Activated naive CD4-positive, alpha-beta T cell treated with anti-CD3 and anti-CD28 coated beads, Interleukin-2, amount 10 ng/mL, durations not matched to agents 7 days and 5 days (primary cell): ENCODE measurements at regions of chr17 and their contacts with region 1.

Region 1: DNA sequence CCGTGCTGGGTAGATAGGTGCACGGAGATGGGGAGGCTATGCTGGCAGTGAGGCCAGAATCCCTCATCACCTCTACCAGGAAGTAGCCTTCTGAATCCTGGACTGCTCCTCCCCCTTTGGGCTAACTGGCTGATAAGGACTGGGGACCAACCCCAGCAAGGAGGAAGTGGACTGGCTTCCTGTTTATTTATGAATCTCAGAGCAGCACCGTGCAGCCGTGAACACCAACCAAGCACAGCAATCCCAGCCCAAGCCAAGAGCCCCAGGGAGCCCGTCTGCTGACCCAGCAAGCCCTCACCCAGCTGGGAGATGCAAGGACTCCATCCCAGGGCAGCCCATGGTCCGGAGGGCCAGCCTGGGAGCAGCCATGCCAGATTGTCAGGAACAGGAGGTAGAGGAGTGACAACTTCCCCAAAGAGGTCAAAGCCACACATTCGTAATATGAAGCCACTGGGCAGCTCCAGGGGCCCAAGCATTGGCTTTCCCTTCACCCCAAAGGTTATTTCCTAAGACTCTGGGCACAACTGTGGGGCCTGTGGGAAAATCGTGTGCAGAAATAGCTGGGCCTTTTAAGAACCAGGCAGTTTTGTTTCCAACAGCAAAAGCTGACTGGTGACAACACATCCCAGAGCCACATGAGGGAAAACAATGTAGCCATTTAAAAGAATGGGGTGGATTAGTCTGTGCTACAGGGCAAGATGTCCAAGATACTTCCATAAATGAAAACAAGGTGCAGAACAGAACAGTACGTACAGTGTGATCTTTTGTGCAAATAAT is 23.9 kb downstream of the PHB1 start:
- DNase-seq: peak; percentile 34
- H3K4me3 Mint-ChIP-seq: peak overlapping the region; percentile 25
- H3K27ac Mint-ChIP-seq: peak overlapping the region; percentile 90
- H3K4me1 Mint-ChIP-seq: peaks cover 73% of the 10 kb centered on the region
- H3K27me3 Mint-ChIP-seq: peaks cover 3% of the 10 kb centered on the region

Region 2: DNA sequence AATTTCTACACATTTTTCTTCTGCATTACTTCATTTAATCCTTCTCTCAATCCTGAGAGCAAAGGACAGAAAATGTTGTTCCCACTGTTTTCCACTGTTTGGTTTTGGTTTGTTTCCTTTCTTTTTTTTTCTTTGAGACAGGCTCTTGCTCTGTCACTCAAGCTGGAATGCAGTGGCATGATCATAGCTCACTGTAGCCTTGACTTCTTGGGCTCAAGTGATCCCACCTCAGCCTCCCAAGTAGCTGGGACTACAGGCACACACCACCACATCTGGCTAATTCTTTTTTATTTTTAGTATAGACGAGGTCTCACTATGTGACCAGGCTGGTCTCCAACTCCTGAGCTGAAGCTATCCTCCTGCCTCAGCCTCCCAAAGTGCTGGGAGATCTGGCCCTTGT is 21.6 kb before region 1 on chr17:
- CTCF ChIA-PET with region 1: interaction called, 21 read pairs
- DNase-seq: no peak
- H3K4me3 Mint-ChIP-seq: no peak overlapping the region
- H3K27ac Mint-ChIP-seq: no peak overlapping the region
- H3K4me1 Mint-ChIP-seq: peaks cover 32% of the 10 kb centered on the region
- H3K27me3 Mint-ChIP-seq: peaks cover 13% of the 10 kb centered on the region